Caco-2 (cell line): ENCODE measurements at regions of chr9 and their contacts with region 1.

Region 1: GRCh38 chr9:93302551-93303257 is 118.8 kb downstream of the WNK2 start:
- DNase-seq: peak; percentile 55 to 63
- H3K4me3 ChIP-seq: no peak overlapping the region
- H3K4me3 Mint-ChIP-seq: no peak overlapping the region
- H3K27ac Mint-ChIP-seq: no peak overlapping the region
- H3K4me1 ChIP-seq: no peaks in the 10 kb centered on the region
- H3K4me1 Mint-ChIP-seq: no peaks in the 10 kb centered on the region
- H3K27me3 ChIP-seq: no peaks in the 10 kb centered on the region
- H3K27me3 Mint-ChIP-seq: no peaks in the 10 kb centered on the region
- CTCF ChIP-seq: peak; percentile 32 to 49

Region 2: DNA sequence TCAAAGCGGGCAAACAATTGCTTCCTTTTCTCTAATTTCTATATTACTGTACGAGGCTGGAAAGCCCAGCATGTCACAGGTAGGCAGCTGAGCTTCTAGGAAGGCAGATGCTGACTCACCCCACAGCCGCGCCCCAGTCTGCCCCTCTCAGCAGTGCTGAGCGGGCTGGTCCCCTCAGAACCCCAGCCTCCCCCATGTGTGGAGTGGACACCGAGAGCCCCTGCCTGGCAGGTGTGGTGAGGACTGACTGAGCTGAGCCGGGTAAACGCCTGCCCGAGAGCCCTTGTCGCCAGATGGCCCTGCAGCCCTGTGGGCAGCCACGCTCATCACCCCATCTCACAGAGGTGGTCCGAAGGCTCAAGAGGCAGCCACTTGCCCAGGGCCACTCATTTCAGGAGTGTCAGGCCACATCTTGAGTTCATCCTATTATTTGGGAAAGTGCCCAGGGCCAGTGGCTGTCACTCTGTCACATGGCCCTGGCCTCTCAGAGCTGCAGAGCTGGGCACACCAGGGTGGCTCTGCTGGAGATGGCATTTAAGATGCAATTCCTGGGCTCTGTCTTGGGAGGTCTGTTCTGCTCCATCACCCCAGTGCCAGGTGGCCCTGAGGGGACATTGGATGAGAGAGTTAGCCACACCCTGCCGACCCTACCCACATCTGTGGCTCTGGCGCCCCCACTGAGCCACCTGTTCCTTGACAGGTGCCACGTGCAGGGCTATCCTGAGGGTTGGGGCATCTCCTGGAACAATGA is 194.2 kb before region 1 on chr9:
- CTCF ChIA-PET with region 1: interaction called, 3 read pairs
- POLR2A ChIA-PET with region 1: no interaction called
- intact Hi-C with region 1: loop called (anchors 1 kb)
- DNase-seq: no peak
- H3K4me3 ChIP-seq: no peak overlapping the region
- H3K4me3 Mint-ChIP-seq: no peak overlapping the region
- H3K27ac Mint-ChIP-seq: no peak overlapping the region
- H3K4me1 ChIP-seq: no peaks in the 10 kb centered on the region
- H3K4me1 Mint-ChIP-seq: no peaks in the 10 kb centered on the region
- H3K27me3 ChIP-seq: no peaks in the 10 kb centered on the region
- H3K27me3 Mint-ChIP-seq: no peaks in the 10 kb centered on the region
- CTCF ChIP-seq: no peak

Region 3: GRCh38 chr9:93154315-93154903 is 148.3 kb before region 1 on chr9:
- CTCF ChIA-PET with region 1: interaction called, 12 read pairs
- POLR2A ChIA-PET with region 1: no interaction called
- intact Hi-C with region 1: no loop called
- DNase-seq: peak; percentile 49 to 60
- H3K4me3 ChIP-seq: no peak overlapping the region
- H3K4me3 Mint-ChIP-seq: no peak overlapping the region
- H3K27ac Mint-ChIP-seq: no peak overlapping the region
- H3K4me1 ChIP-seq: no peaks in the 10 kb centered on the region
- H3K4me1 Mint-ChIP-seq: no peaks in the 10 kb centered on the region
- H3K27me3 ChIP-seq: no peaks in the 10 kb centered on the region
- H3K27me3 Mint-ChIP-seq: no peaks in the 10 kb centered on the region
- CTCF ChIP-seq: peak; percentile 21 to 47

Region 4: GRCh38 chr9:93159601-93160471 is 142.9 kb before region 1 on chr9:
- CTCF ChIA-PET with region 1: interaction called, 12 read pairs
- POLR2A ChIA-PET with region 1: no interaction called
- intact Hi-C with region 1: loop called (anchors 1 kb)
- DNase-seq: peak; percentile 83 to 85
- H3K4me3 ChIP-seq: no peak overlapping the region
- H3K4me3 Mint-ChIP-seq: no peak overlapping the region
- H3K27ac Mint-ChIP-seq: no peak overlapping the region
- H3K4me1 ChIP-seq: no peaks in the 10 kb centered on the region
- H3K4me1 Mint-ChIP-seq: no peaks in the 10 kb centered on the region
- H3K27me3 ChIP-seq: no peaks in the 10 kb centered on the region
- H3K27me3 Mint-ChIP-seq: no peaks in the 10 kb centered on the region
- CTCF ChIP-seq: peak; percentile 77 to 88

Region 5: GRCh38 chr9:93288891-93289883 is 13.5 kb before region 1 on chr9:
- CTCF ChIA-PET with region 1: interaction called, 10 read pairs
- POLR2A ChIA-PET with region 1: no interaction called
- intact Hi-C with region 1: no loop called
- DNase-seq: peak in 1 of 2 experiments; percentile 29
- H3K4me3 ChIP-seq: no peak overlapping the region
- H3K4me3 Mint-ChIP-seq: no peak overlapping the region
- H3K27ac Mint-ChIP-seq: no peak overlapping the region
- H3K4me1 ChIP-seq: no peaks in the 10 kb centered on the region
- H3K4me1 Mint-ChIP-seq: no peaks in the 10 kb centered on the region
- H3K27me3 ChIP-seq: no peaks in the 10 kb centered on the region
- H3K27me3 Mint-ChIP-seq: no peaks in the 10 kb centered on the region
- CTCF ChIP-seq: no peak